ENCODE measurements at regions of chr14 and their contacts with region 1.

Region 1: GRCh38 chr14:45426670-45427282 is 173.8 kb upstream of the MIS18BP1 start:
- DNase-seq: no peak
- ATAC-seq: peak; percentile 33 to 50

Region 2: DNA sequence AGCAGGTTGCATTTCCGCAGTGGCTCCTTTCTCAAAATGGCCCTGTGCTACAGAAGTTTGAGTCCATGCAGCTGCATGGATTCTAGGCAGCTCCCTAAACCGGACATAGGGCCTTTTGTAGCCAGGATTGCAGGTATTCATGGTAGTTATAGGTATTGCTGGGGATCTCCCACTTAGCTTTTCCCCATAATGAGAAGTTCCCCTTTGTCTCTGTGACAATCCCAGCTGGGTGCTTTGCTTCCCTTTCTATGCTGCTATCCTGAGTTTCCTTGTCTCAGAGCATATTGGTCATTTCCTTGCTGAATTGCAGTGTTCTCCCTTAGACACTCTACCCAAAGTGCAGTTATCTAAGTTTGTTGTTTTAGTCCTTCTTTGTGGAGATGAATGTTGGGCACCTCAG is 52.9 kb before region 1 on chr14:
- intact Hi-C with region 1: no loop called
- DNase-seq: no peak
- ATAC-seq: no peak

Region 3: DNA sequence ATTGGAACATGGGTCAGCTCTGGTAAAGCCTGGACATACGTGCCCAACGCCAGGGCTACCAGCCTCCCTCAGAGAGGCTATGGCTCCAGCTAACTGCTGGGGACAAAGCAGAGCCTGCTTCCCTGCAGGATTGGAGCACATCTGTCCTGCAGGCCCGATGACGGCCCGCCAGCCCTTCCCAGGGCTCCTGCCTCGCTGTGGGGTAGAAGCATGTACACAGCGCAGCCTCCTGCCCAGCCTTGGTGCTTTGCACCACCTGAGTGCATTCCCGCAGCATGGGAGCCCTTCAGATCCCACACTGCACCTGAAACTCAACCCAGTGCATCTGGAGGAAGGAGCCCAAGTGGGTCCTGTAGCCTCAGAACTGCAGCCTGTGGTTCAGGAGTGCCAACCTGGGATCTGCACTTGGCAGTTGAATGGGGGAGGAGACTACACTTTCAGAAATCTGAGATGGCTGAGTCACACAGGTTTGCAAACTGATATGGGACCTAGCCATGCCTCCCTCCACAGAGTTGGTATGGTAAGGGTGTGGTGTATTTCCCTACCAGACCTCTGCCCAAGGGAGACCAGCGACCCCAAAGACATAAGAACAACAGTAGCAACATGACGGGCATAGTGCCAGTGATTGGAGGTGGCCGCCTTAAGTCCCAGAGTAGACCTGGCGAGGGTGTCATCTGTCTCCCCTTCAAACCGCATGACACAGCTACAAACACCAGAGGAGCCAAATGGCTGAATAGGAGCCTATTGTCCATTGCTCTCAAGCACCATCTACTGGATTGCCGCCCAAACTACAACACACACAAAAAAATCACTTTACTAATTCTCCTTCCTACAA is 100.2 kb after region 1 on chr14:
- intact Hi-C with region 1: loop called (anchors 1 to 5 kb)
- DNase-seq: no peak
- ATAC-seq: peak; percentile 69 to 78

Measured in left cardiac atrium (tissue), 4 donors.